Transverse colon (tissue), 4 donors: ENCODE measurements at regions of chr9 and their contacts with region 1.

Region 1: DNA sequence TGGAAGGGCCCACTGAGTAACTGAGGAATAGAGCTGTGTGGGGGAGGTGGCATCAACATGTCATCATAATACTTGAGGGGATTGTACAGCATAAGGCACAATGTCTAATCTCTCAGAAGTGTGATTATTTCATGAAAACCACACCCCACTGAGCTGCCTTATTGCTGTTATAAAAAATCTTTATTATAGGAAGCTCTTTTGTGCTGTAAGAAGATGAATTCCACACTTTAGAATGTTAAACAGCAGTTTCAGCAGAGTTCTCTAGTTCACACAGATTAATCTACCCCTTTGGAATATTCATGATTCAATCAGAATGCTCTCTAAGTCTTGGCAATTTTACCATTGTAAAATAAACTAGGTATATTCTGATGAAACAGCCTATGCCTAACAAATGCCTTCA is 1389.6 kb downstream of the PTPRD start:
- DNase-seq: no peak
- H3K4me3 ChIP-seq: no peak overlapping the region
- H3K27ac ChIP-seq: no peak overlapping the region
- H3K4me1 ChIP-seq: no peaks in the 10 kb centered on the region
- H3K27me3 ChIP-seq: no peaks in the 10 kb centered on the region
- CTCF ChIP-seq: no peak
- EP300 ChIP-seq: no peak
- POLR2A ChIP-seq: no peak

Region 2: DNA sequence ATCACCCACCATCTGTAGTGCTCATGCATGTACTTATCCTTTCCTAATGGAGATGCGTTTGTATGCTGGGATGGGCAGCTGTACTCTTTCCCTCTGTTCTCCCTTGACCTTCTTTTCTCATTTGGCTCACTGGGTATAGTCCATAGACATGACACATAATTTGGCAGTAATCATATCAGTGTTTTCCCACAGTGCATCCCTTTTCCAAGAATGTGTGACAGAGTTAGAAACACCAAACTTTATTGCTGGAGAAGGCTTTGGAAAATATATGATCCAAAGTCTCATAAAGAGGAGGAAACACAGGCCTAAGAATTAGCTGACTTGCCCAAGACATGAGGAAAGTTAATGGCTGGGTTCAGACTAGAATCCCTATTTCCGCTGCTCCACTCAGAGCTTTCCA is 190.2 kb before region 1 on chr9:
- in situ Hi-C with region 1: no loop called
- intact Hi-C with region 1: loop called (anchors 5 kb)
- DNase-seq: no peak
- H3K4me3 ChIP-seq: no peak overlapping the region
- H3K27ac ChIP-seq: no peak overlapping the region
- H3K4me1 ChIP-seq: no peaks in the 10 kb centered on the region
- H3K27me3 ChIP-seq: no peaks in the 10 kb centered on the region
- CTCF ChIP-seq: no peak
- EP300 ChIP-seq: no peak
- POLR2A ChIP-seq: no peak

Region 3: DNA sequence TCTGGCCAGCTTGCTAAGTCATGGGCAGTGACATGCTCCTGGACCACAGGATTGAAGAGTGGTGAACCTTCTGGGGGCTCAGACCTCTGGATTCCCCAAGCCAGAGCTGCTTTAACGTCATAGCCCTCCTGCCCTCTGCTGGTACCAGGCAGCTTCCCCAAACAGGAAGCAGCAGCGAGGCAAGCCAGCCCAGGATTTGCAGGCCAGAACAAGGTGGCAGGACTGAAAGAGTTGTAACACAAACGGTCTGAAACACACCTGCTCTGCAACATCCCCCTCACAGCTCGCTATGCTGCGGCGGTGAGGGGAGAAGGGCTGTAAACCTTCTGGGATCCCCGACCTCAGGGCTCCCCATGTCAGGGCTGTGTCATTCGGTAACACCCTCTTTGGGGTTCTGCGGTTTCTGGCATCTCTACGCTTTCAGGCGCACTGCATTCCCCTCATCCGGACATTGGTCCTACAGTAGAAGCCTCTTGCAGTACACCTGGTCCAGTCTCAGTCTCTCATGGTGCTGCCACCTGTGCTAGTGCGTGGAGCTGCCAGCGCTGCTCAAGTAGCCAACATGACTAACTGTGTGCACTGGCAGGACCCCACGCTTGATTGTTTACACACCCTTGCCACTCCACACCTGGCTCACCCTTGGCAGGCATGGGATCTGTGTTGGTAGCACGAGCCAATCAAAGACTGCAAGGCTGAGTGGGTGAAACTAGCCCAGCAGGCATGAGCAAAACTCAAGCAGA is 496.4 kb after region 1 on chr9:
- in situ Hi-C with region 1: no loop called
- intact Hi-C with region 1: no loop called
- DNase-seq: no peak
- H3K4me3 ChIP-seq: no peak overlapping the region
- H3K27ac ChIP-seq: no peak overlapping the region
- H3K4me1 ChIP-seq: no peaks in the 10 kb centered on the region
- H3K27me3 ChIP-seq: no peaks in the 10 kb centered on the region
- CTCF ChIP-seq: no peak
- EP300 ChIP-seq: no peak
- POLR2A ChIP-seq: no peak